HEK293T (cell line): ENCODE measurements at regions of chr17 and their contacts with region 1.

Region 1: DNA sequence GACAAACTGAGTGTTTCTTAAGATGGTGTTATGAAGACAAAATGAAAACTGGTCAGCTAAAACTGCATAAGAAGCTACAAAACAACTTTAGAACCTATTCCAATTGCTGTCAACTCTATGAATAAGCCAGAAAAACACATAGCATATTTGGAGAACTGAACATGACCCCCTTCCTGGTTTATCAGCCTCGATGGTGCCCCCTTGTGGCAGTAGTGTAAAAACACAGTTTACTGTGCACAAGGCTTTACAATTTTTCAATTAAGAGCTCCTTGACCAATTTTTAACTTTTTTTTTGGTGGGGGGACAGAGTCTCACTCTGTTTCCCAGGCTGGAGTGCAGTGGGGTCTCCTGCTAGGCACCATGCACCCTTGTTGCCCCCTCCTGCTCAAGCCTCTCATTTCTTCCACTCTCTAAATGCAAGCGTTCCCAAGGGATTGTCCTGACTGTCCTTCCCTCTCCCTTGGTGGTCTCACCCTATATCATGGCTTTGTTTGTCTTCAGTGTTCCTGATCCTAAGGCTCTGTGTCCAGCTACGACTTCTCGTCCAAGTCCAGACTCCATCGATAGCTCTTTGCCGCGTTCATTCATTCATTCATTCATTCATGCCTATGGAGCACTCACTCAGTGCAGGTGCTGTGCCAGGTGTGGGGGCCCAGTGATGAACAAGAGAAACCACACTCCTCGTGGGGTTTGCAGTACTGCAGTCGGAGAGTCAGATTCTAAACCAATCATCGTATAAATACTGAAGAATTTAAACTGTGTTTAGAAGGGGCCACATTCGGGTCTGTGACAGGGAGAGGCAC is 7.5 kb downstream of the EIF1 start:
- DNase-seq: peak; percentile 76

Region 2: DNA sequence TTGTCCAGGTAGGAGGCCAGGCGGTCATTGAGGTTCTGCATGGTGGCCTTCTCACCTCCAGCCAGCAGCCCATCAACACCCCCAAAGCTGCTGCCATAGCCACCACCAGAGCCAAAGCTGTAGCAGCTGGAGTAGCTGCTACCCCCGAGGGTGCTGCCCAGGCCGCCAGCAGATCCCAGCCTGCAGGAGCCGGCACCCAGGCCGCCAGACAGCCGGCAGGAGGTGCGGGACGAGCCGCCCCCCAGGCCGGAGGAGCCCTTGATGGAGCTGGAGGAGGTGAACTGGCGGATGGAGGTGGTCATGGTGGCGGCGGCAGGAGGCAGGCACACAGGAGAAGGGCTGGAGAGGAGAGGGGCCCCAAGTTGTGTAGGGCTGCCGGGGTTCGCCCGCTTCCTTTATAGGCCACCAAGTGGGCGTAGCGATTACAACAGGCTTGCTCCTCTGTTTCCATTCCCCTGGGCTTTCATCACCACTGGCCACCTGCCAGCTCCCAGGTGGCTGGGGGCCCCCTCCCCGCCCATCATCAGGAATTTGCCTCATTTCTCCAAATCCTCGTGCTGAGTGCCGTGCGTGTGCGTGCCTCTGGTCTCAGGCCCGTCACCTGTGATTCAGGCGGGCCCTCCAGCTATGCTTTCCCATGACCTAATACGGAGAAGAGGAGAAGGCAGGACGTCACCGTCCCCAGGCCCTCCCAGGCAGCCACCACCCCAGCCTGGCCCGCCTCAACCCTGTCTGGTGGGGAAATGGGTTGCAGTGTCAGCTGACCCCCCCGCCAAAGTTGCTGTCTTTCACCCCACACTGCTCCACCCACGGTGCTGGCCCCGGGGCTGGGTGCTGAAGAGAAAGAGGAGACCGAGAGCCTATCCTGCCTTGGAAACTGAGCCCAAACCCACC is 71.7 kb before region 1 on chr17 and contains the start of gene KRT17:
- CTCF ChIA-PET with region 1: no interaction called
- POLR2A ChIA-PET with region 1: no interaction called
- DNase-seq: no peak

Region 3: DNA sequence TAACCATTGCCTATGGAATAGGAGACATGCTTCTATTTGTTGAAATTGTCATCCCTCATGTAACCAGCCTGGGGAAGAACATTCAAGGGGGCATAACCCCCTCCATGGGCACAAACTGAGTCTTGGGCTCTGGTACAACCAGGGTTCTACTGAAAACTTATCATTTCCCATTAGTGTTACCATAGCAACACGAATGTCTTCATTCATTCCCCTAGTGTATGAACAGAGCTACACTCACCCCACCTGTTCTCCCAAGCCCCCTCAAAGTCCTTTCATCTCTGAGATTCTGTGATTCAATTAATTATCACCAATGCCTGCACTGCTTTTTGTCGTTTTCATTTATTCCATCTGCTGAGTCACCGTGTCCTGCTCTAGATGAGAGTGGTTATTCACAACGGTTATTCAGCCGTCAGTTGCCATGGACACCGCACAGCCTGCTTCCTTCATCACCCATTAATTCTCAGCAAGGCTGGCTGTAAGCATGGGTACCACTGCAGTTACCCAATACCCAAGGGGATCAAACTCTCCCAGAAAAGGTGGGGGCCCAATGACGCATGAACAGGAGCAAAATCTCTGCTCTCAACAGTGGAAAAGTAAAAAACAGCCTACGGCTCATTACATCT is 14.4 kb after region 1 on chr17:
- CTCF ChIA-PET with region 1: interaction called, 18 read pairs
- POLR2A ChIA-PET with region 1: interaction called, 199 read pairs
- DNase-seq: no peak

Region 4: GRCh38 chr17:41758601-41759000 is 62.4 kb after region 1 on chr17:
- CTCF ChIA-PET with region 1: no interaction called
- POLR2A ChIA-PET with region 1: no interaction called
- DNase-seq: no peak

Region 5: GRCh38 chr17:41771389-41772206 is 75.4 kb after region 1 on chr17:
- CTCF ChIA-PET with region 1: no interaction called
- POLR2A ChIA-PET with region 1: no interaction called
- DNase-seq: no peak